ENCODE measurements at regions of chr12 and their contacts with region 1.

Region 1: DNA sequence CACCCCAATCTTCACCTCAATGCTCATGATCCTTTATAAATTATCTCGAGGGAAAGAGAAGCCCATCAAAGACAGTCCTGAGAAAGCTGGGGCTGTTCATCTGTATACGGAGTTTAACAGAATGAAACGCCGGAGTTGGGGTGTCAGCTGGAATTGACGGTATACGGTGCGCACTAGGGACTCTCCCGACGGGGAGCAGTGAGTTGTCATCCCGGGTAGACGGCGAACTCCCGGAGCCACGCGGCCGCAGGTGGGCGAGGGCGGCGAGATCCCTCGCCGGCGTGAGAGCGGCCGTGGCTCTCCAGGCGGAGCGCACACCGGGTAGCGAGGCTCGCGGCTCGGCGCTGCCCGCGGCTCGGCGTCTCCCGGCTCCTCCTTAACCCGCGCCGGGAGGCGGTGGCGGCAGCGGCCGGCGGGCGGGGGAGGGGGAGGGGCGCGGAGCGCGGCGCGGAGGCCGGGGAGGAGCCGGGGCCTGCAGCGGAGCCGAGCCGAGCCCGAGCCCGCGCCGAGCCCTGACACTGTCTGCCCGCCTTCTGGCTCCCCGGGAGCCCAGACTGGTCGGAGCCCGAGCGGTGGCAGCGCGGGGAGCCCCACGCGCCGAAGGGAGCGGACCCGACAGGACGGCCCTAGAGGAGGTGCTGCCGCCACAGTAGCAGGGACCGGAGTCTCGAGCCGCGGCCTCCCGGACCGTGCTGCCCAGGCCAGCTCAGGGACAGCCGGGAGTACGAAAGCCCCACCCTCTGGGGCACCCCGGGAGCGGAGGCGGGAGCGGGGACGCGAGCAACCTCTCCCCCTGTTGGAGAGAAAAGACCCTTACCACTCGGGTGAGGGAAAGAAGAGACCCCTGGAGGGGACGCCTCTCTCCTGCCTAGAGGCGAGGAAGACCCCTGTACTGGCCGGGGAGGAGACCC is at the start of gene FOXJ2:
- DNase-seq: peak; percentile 87 to 94
- ATAC-seq: peak; percentile 92
- H3K4me3 ChIP-seq: peak within 1 kb of the TSS; percentile 67 to 99
- H3K27ac ChIP-seq: peak within 1 kb of the TSS; percentile 94 to 95
- H3K4me1 ChIP-seq: peaks cover 2 to 10% of the 10 kb centered on the region in 2 donors
- H3K27me3 ChIP-seq: no peaks in the 10 kb centered on the region
- total RNA-seq, gene FOXJ2: 29.8 to 32.1 TPM

Region 2: DNA sequence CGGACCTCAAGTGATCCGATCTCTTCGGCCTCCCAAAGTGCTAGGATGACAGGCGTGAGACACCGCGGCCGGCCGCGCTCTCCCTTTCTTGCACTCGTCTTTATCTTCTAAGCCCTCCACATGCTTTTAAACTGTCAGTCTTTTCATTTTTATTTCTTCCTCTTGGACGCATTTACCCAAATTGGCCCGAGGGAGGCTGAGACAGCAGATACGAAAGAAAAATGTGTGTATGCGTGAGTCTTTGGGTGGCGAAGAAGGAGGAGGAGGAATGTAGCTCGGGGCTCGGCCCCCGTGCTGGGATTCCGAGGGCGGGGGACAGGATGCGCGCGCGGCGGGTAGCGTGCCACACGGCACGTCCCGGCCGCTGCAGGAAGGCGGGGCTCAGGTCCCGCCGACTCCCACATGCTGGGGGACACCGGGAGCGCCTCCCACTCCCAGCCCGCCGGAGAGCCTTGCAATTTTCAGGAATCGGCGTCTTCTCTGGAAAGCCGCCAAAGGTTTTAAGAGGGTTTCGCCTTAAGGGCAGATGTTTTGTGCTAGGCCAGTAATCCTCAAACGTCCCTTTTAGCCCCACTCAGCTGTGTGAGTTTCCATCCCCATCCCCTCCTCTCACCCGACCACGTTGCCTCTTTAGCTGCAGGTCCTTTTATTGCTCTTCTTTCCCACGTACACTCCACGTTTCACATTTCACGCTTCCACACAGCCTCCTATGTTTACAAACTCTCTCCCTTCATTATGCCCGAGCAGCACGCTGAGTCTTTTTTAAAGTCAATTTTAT is 61.8 kb before region 1 on chr12:
- intact Hi-C with region 1: loop called in 1 of 2 experiments (anchors 2 kb)
- DNase-seq: peak; percentile 96 to 97
- ATAC-seq: peak; percentile 96
- H3K4me3 ChIP-seq: peak overlapping the region; percentile 28 to 88
- H3K27ac ChIP-seq: peak overlapping the region in 1 of 2 donors; percentile 74
- H3K4me1 ChIP-seq: no peaks in the 10 kb centered on the region
- H3K27me3 ChIP-seq: no peaks in the 10 kb centered on the region